ENCODE measurements at regions of chr7 and their contacts with region 1.

Region 1: DNA sequence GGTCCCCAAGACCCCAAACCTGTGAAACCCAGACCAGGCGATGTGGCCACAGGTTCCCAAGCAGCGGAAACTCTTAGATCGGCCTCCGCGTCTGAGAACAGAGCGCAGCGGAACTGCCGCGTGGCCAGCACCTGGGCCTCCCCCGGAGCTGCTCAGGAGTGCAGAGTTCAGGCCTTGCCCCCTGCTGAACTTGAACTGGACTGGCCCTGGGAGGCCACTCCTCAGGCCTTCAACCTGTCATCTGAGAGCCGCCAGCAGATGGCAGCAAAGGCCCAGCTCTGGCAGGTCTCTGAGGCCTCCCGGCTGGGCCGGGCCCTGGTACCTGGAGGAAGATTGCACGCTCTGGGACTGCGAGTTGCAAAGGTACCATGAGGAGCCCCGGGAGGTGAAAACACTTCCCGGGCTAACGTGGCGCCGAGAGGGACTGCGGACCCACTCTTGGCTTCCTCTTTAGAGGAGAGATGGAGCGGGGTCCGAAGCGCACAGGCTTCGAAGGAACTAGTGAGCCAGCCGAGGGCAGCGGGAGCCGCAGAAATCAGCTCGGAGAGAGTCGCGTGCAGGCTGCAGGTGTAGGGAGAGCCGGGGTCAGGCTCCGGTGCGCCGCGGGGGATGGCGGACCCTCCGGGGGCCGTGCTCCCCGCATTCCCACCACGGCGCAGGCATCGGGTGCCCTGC is 89.1 kb downstream of the PAXIP1 start:
- DNase-seq: peak; percentile 81 to 93 (median 86)
- ATAC-seq: peak; percentile 98
- H3K4me3 ChIP-seq: peak overlapping the region; percentile 49
- H3K4me3 Mint-ChIP-seq: peak overlapping the region; percentile 84
- H3K27ac ChIP-seq: no peak overlapping the region
- H3K27ac Mint-ChIP-seq: no peak overlapping the region
- H3K4me1 ChIP-seq: peaks cover 10% of the 10 kb centered on the region
- H3K4me1 Mint-ChIP-seq: peaks cover 5% of the 10 kb centered on the region
- H3K27me3 ChIP-seq: peaks cover 0 to 10% of the 10 kb centered on the region in 2 experiments
- H3K27me3 Mint-ChIP-seq: peaks cover 26% of the 10 kb centered on the region
- CTCF ChIP-seq: peak; percentile 94

Region 2: GRCh38 chr7:154463794-154464193 is 450.0 kb before region 1 on chr7:
- CTCF ChIA-PET with region 1: no interaction called
- POLR2A ChIA-PET with region 1: no interaction called
- intact Hi-C with region 1: no loop called
- DNase-seq: no peak
- ATAC-seq: no peak
- H3K4me3 ChIP-seq: no peak overlapping the region
- H3K4me3 Mint-ChIP-seq: no peak overlapping the region
- H3K27ac ChIP-seq: no peak overlapping the region
- H3K27ac Mint-ChIP-seq: no peak overlapping the region
- H3K4me1 ChIP-seq: no peaks in the 10 kb centered on the region
- H3K4me1 Mint-ChIP-seq: no peaks in the 10 kb centered on the region
- H3K27me3 ChIP-seq: no peaks in the 10 kb centered on the region
- H3K27me3 Mint-ChIP-seq: no peaks in the 10 kb centered on the region
- CTCF ChIP-seq: no peak

Region 3: GRCh38 chr7:154953006-154953684 is 39.4 kb after region 1 on chr7:
- CTCF ChIA-PET with region 1: interaction called, 12 read pairs
- POLR2A ChIA-PET with region 1: no interaction called
- intact Hi-C with region 1: loop called (anchors 1 to 2 kb)
- DNase-seq: peak; percentile 58 to 83 (median 65)
- ATAC-seq: peak; percentile 62
- H3K4me3 ChIP-seq: no peak overlapping the region
- H3K4me3 Mint-ChIP-seq: no peak overlapping the region
- H3K27ac ChIP-seq: no peak overlapping the region
- H3K27ac Mint-ChIP-seq: no peak overlapping the region
- H3K4me1 ChIP-seq: no peaks in the 10 kb centered on the region
- H3K4me1 Mint-ChIP-seq: no peaks in the 10 kb centered on the region
- H3K27me3 ChIP-seq: no peaks in the 10 kb centered on the region
- H3K27me3 Mint-ChIP-seq: no peaks in the 10 kb centered on the region
- CTCF ChIP-seq: peak; percentile 67

Region 4: GRCh38 chr7:155009570-155010157 is 95.9 kb after region 1 on chr7:
- CTCF ChIA-PET with region 1: no interaction called
- POLR2A ChIA-PET with region 1: no interaction called
- intact Hi-C with region 1: loop called in 1 of 2 experiments (anchors 5 kb)
- DNase-seq: peak in 8 of 14 experiments; percentile 12 to 53 (median 28)
- ATAC-seq: no peak
- H3K4me3 ChIP-seq: no peak overlapping the region
- H3K4me3 Mint-ChIP-seq: no peak overlapping the region
- H3K27ac ChIP-seq: no peak overlapping the region
- H3K27ac Mint-ChIP-seq: no peak overlapping the region
- H3K4me1 ChIP-seq: no peaks in the 10 kb centered on the region
- H3K4me1 Mint-ChIP-seq: peaks cover 15% of the 10 kb centered on the region
- H3K27me3 ChIP-seq: no peaks in the 10 kb centered on the region
- H3K27me3 Mint-ChIP-seq: no peaks in the 10 kb centered on the region
- CTCF ChIP-seq: peak; percentile 57

Region 5: DNA sequence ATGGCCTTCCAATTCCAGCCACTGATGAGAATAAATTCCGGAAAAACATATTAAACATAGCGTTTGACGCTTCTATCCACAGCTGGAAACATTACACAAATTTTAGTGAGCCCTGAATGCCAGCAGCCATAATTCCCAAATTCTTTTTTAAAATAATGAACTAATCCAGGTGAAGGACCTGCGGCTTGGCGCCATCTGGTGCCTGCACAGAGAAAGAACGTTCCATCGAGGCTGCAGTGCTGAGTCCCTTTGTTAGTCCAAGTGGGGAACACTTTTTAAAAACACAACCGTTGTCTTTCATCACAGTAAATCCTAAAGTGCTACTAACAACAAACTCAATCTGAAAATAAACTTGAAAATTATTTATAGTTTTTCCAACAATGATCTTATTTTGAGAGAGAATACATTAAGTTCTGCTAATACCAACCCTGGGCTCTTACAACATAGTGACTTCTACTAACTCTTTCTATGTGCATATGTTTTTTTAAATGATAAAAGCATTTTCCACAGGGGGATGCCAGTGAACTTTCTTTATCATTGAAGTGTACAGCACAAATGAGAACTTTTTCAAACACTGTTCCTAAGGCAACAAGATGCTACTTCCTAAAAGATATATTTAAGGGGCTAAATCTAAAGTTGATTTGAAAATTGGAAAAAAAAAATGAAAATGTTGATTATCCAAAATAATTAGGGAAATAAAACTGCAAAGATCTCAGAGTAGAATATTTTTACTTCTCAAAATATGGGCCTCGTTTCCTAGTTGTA is 1559.9 kb after region 1 on chr7:
- CTCF ChIA-PET with region 1: no interaction called
- POLR2A ChIA-PET with region 1: no interaction called
- intact Hi-C with region 1: loop called in 1 of 2 experiments (anchors 10 kb)
- DNase-seq: peak in 4 of 14 experiments; percentile 7 to 36 (median 25)
- ATAC-seq: no peak
- H3K4me3 ChIP-seq: no peak overlapping the region
- H3K4me3 Mint-ChIP-seq: no peak overlapping the region
- H3K27ac ChIP-seq: no peak overlapping the region
- H3K27ac Mint-ChIP-seq: no peak overlapping the region
- H3K4me1 ChIP-seq: no peaks in the 10 kb centered on the region
- H3K4me1 Mint-ChIP-seq: no peaks in the 10 kb centered on the region
- H3K27me3 ChIP-seq: peaks cover 12 to 14% of the 10 kb centered on the region in 2 experiments
- H3K27me3 Mint-ChIP-seq: peaks cover 40% of the 10 kb centered on the region
- CTCF ChIP-seq: peak; percentile 62